Activated CD4-positive, alpha-beta memory T cell treated with anti-CD3 and anti-CD28 coated beads for 36 hours (primary cell): ENCODE measurements at regions of chr1 and their contacts with region 1.

Region 1: DNA sequence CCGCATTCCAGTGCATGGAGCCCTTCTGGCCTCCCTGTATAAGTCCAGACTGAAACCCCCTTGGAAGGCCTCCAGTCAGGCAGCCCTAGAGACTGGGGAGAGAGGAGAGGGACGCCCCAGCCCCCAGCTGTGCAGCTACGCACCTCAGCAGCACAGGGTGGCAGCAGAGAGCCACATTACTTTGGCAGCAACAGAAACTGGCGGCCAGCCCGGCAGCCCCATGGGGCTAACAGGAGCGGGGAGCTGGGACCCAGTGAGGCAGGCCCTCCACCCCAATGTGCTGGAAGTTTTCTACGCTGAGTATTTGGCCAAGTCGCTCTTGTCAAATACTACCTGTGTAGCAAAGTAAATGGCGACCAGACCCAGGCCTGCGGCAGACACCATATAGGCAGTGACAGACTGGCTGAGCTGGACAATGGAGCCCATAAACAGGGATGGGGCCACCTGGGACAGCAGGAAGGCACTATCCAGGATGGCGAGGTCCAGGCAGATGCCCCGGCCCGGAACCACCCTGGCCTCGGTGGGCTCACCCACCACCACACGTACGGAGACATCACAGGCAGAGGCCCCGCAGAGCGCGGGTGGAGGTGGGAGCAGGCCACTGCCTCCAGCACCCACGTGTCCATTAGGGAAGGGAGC is 21.2 kb downstream of the SLC45A3 start:
- DNase-seq: peak; percentile 85
- H3K4me3 Mint-ChIP-seq: no peak overlapping the region
- H3K27ac Mint-ChIP-seq: no peak overlapping the region
- H3K4me1 Mint-ChIP-seq: no peaks in the 10 kb centered on the region
- H3K27me3 Mint-ChIP-seq: peaks cover 2% of the 10 kb centered on the region

Region 2: GRCh38 chr1:204480515-204480914 is 1178.5 kb before region 1 on chr1:
- CTCF ChIA-PET with region 1: no interaction called
- POLR2A ChIA-PET with region 1: no interaction called
- intact Hi-C with region 1: no loop called
- DNase-seq: no peak
- H3K4me3 Mint-ChIP-seq: no peak overlapping the region
- H3K27ac Mint-ChIP-seq: no peak overlapping the region
- H3K4me1 Mint-ChIP-seq: peaks cover 65% of the 10 kb centered on the region
- H3K27me3 Mint-ChIP-seq: no peaks in the 10 kb centered on the region

Region 3: DNA sequence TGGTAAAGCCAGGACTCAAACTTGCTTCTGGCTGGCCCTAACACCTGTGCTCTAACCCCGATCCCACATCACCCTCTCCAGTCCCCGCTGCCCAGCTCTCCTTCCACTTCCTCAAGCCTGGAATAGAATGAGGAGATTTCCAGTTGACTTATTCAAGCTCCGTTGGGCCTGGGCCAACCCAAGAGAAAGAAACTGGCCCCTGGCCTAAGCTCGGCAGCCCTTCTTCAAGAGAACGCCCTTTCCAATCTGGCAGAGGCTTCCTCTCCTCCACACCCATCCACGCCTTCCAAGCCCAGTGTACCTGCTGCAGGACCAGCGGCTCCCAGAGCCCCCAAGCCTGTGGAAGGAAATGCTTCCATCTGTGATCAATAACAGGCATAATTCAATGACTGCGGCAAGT is 1025.4 kb before region 1 on chr1:
- CTCF ChIA-PET with region 1: no interaction called
- POLR2A ChIA-PET with region 1: no interaction called
- intact Hi-C with region 1: no loop called
- DNase-seq: no peak
- H3K4me3 Mint-ChIP-seq: no peak overlapping the region
- H3K27ac Mint-ChIP-seq: no peak overlapping the region
- H3K4me1 Mint-ChIP-seq: no peaks in the 10 kb centered on the region
- H3K27me3 Mint-ChIP-seq: peaks cover 17% of the 10 kb centered on the region

Region 4: DNA sequence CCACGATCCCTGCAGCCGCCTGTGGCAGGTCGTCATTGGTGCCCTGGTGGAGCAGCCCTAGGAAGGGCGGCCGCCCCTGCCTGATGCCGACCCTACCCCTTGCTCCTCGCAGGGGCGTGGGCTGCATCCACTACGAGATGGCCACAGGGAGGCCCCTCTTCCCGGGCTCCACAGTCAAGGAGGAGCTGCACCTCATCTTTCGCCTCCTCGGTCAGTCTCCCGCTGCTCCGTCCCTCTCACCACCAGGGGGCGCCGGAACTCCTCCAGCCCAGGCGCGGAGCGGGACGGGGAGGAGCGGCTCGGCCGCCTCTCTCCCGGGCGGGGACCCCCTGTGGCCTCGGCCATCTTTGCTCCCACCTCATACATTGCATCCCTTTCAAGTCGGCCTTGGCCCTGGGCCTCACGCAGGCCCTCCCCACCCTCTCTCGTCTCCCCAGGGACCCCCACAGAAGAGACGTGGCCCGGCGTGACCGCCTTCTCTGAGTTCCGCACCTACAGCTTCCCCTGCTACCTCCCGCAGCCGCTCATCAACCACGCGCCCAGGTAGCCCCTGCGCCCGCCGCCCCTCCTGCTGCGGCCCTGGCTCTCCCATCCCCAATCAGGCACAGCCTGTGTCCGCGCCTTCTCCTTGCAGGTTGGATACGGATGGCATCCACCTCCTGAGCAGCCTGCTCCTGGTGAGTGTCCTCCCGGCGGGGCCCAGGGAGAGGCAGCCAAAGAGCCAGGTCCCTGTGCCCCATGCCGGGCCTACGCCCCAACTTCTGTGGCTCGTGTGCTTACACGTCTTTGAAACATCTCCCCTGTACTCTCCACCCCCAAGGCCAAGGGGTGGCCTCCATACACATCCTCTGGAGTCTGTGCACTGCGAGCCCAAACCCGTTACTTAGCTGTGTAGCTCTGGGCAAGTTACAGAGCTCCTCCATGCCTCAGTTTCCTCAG is 129.9 kb before region 1 on chr1:
- CTCF ChIA-PET with region 1: interaction called, 253 read pairs
- POLR2A ChIA-PET with region 1: no interaction called
- intact Hi-C with region 1: loop called (anchors 5 kb)
- DNase-seq: peak; percentile 85
- H3K4me3 Mint-ChIP-seq: peak overlapping the region; percentile 37
- H3K27ac Mint-ChIP-seq: no peak overlapping the region
- H3K4me1 Mint-ChIP-seq: peaks cover 4% of the 10 kb centered on the region
- H3K27me3 Mint-ChIP-seq: peaks cover 7% of the 10 kb centered on the region

Region 5: DNA sequence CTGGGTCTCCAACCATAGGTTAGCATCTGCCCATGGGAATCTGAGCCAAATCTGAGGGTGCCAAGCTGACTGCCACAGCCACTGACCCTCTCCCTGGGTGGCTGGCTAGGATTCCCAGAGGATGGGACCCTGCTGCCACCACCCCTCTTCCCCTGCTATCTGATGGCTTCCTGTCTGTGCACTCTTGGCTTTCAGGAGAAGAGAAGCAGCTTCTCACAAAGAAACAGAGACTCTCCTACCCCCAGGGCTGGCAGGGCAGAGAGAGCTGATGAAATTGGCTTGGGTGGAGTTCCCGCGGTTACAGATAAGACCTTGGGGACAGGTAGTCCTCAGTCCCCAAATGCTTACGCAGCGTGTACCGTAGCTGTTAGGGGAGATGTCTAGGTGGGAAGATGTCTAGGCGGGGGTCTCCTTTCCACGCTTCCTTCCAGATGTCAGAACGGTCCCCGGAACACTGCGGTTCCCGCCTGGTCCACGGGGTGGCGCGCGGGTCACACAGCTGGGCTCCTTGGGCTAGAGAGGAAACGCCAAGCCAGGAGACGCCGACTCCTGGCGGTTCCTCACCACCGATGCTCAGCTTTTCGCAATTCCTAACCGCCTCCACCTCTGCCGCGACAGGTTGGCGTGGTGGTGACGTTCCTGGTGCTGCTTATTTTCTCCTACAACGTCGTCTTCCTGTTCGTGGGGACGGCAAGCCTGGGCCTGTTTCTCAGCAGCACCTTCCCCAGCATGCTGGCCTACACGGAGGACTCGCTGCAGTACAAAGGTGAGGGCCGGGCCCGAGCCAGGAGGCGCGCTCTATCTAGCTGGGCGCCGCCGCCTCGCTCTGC is 67.3 kb before region 1 on chr1:
- CTCF ChIA-PET with region 1: interaction called, 631 read pairs
- POLR2A ChIA-PET with region 1: interaction called, 16 read pairs
- intact Hi-C with region 1: loop called (anchors 1 kb)
- DNase-seq: peak; percentile 94
- H3K4me3 Mint-ChIP-seq: peak overlapping the region; percentile 77
- H3K27ac Mint-ChIP-seq: peak overlapping the region; percentile 79
- H3K4me1 Mint-ChIP-seq: peaks cover 29% of the 10 kb centered on the region
- H3K27me3 Mint-ChIP-seq: no peaks in the 10 kb centered on the region

Region 6: DNA sequence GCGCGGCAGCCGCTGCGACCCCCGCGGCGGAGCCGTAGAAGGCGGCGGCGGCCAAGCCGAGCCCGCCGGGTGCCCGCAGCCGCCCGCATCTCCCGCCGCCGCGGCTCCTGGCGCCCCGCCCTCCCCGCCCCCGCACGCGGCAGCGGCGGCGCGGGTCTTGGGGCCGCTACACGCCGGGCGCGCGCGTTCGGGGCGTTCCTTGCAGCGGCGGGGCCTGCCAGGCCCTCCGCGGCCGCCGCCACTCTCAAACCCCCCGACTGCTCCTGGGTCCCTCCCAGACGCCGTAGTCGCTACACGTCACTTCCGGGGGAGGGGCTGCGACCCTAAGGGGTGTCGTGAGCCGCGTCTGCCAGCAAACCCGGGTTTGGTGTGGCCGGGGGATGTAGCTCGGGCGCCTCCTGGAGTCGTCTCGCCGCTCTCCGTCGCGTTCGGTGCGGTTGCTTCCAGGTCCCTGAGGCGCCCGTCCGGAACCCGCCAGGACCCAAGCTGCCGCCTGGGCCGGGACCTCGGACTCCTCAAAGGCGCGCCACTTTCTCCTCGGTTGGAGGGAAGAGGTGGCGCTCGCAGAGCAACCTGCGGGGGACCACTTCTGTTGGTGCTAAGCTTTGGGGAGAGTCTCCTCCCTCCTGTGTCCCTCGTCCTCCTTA is 27.2 kb before region 1 on chr1 and contains the start of gene ELK4:
- CTCF ChIA-PET with region 1: interaction called, 88 read pairs
- POLR2A ChIA-PET with region 1: interaction called, 8 read pairs
- intact Hi-C with region 1: no loop called
- DNase-seq: peak; percentile 100
- H3K4me3 Mint-ChIP-seq: peak within 1 kb of the TSS; percentile 85
- H3K27ac Mint-ChIP-seq: peak within 1 kb of the TSS; percentile 90
- H3K4me1 Mint-ChIP-seq: peaks cover 34% of the 10 kb centered on the region
- H3K27me3 Mint-ChIP-seq: no peaks in the 10 kb centered on the region
- total RNA-seq, gene ELK4: 60.7 to 65.8 TPM

Region 7: DNA sequence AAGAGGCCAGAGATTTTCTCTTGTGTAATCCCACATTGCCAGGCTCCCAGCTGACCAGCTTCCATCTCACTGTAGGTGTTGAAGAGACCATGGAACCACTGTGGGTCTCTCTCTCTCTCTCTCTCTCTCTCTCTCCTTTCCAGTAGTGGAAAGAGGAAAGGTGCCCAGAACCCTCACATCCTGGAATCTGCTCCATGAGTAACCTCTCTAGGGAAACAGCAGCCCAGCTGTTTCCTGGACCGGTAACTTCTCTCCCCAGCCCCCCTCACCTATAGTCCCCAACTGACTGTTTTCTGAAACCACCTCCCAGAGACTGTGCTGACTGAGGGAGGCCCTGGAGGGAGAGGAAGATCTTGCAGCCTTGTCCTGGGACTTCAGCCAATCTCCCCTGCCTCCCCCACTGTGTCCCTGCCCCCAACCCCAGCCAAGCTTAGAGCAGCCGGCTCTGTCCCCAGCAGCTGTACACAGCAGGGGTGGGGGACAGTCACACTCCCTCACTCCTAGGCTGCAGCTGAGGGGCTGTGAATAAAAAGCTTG is 41.9 kb after region 1 on chr1:
- CTCF ChIA-PET with region 1: interaction called, 317 read pairs
- POLR2A ChIA-PET with region 1: no interaction called
- intact Hi-C with region 1: no loop called
- DNase-seq: no peak
- H3K4me3 Mint-ChIP-seq: no peak overlapping the region
- H3K27ac Mint-ChIP-seq: no peak overlapping the region
- H3K4me1 Mint-ChIP-seq: no peaks in the 10 kb centered on the region
- H3K27me3 Mint-ChIP-seq: peaks cover 9% of the 10 kb centered on the region

Region 8: DNA sequence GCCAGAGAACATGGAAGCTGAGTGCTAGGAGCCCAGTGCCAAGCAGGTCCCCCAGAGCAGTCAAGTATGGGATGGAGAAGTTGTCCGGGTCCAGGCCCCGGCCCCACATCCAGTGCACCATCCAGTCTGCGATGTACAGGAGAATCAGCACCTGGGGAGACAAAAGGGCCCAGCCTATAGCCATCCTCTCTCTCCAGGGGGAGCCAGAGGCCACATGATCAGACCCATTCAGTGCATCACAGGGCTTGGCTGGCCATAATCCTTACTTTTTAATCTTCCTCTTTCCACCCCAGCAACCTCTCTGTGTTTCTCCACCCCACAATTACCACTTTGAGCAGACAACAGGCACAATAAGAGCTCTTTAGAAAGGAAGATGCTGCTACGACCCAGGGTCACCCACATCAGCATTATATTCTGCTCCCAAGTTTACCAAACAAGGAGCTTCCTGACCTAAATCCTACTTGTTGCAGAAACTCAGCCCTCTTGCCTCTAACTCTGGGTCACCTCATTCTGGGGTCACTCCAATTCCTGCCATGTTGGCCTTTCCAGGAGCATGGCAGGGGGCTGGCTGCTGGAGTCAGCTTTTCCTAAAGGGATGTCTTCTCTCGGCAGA is 132.6 kb after region 1 on chr1:
- CTCF ChIA-PET with region 1: interaction called, 34 read pairs
- POLR2A ChIA-PET with region 1: no interaction called
- intact Hi-C with region 1: no loop called
- DNase-seq: peak; percentile 73
- H3K4me3 Mint-ChIP-seq: no peak overlapping the region
- H3K27ac Mint-ChIP-seq: no peak overlapping the region
- H3K4me1 Mint-ChIP-seq: peaks cover 2% of the 10 kb centered on the region
- H3K27me3 Mint-ChIP-seq: no peaks in the 10 kb centered on the region

Region 9: DNA sequence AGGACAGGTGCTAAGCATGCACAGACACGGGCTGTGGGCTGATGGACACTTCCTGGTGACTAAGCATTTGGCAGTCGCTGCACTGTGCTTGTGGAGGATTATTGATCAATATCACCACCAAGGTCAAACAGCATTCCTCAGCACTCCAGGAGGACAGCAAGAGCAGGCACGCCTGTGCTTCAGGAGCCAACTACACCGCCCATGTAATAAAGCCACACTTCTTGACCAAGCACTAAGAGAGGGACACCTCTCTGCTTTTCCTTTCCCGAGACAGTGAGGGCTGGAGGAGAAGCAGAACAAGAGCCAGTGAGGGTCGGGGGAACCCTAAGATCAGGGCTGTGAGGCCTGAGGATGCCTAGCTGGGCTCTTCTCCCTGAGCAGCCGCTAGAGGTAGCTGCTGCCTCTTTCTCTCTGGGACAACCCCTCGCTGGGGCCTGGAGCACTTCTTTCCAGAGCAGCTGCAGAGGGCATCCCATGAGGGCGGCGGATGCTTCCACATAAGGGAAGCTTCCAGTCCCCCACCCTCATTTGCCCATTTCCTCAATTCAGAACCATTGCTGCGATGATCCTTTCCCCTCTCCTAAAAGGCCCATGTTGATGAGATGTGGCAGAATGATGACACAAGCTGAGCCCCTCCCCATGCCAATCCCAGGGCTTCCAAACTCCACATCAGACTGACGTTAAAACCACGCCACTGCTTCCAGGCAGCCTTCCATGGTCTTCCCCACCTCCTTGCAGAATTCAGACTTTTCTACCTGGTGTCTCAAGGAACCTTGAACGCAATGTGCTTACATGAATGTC is 325.1 kb after region 1 on chr1:
- CTCF ChIA-PET with region 1: interaction called, 124 read pairs
- POLR2A ChIA-PET with region 1: no interaction called
- intact Hi-C with region 1: no loop called
- DNase-seq: peak; percentile 42
- H3K4me3 Mint-ChIP-seq: no peak overlapping the region
- H3K27ac Mint-ChIP-seq: no peak overlapping the region
- H3K4me1 Mint-ChIP-seq: no peaks in the 10 kb centered on the region
- H3K27me3 Mint-ChIP-seq: peaks cover 1% of the 10 kb centered on the region